ENCODE measurements at regions of chr10 and their contacts with region 1.

Region 1: GRCh38 chr10:102917962-102918816 is at the start of gene CNNM2:
- DNase-seq: peak; percentile 98 to 100 (median 100)
- ATAC-seq: peak; percentile 88
- H3K4me3 ChIP-seq: peak within 1 kb of the TSS; percentile 92
- H3K4me3 Mint-ChIP-seq: peak within 1 kb of the TSS; percentile 98
- H3K27ac ChIP-seq: peak within 1 kb of the TSS; percentile 91
- H3K27ac Mint-ChIP-seq: peak within 1 kb of the TSS; percentile 90
- H3K4me1 ChIP-seq: peaks cover 34% of the 10 kb centered on the region
- H3K4me1 Mint-ChIP-seq: peaks cover 59% of the 10 kb centered on the region
- H3K27me3 ChIP-seq: peaks cover 3 to 8% of the 10 kb centered on the region in 2 experiments
- H3K27me3 Mint-ChIP-seq: peaks cover 22% of the 10 kb centered on the region
- CTCF ChIP-seq: no peak
- total RNA-seq, gene CNNM2: 8.4 to 8.9 TPM

Region 2: GRCh38 chr10:102853944-102854694 is 64.1 kb before region 1 on chr10 and contains the start of gene BORCS7:
- CTCF ChIA-PET with region 1: no interaction called
- POLR2A ChIA-PET with region 1: interaction called, 8 read pairs
- intact Hi-C with region 1: loop called (anchors 1 to 2 kb)
- DNase-seq: peak; percentile 70 to 94 (median 78)
- ATAC-seq: peak; percentile 99
- H3K4me3 ChIP-seq: peak within 1 kb of the TSS; percentile 98
- H3K4me3 Mint-ChIP-seq: peak within 1 kb of the TSS; percentile 85
- H3K27ac ChIP-seq: peak within 1 kb of the TSS; percentile 87 to 97
- H3K27ac Mint-ChIP-seq: peak within 1 kb of the TSS; percentile 96
- H3K4me1 ChIP-seq: peaks cover 15% of the 10 kb centered on the region
- H3K4me1 Mint-ChIP-seq: peaks cover 16% of the 10 kb centered on the region
- H3K27me3 ChIP-seq: no peaks in the 10 kb centered on the region
- H3K27me3 Mint-ChIP-seq: no peaks in the 10 kb centered on the region
- CTCF ChIP-seq: no peak
- total RNA-seq, gene BORCS7: 10.6 to 11.6 TPM

Region 3: GRCh38 chr10:103069453-103070331 is 151.5 kb after region 1 on chr10:
- CTCF ChIA-PET with region 1: interaction called, 28 read pairs
- POLR2A ChIA-PET with region 1: interaction called, 17 read pairs
- intact Hi-C with region 1: loop called (anchors 1 kb)
- DNase-seq: peak; percentile 59 to 85 (median 68)
- ATAC-seq: peak; percentile 94
- H3K4me3 ChIP-seq: no peak overlapping the region
- H3K4me3 Mint-ChIP-seq: no peak overlapping the region
- H3K27ac ChIP-seq: no peak overlapping the region
- H3K27ac Mint-ChIP-seq: peak overlapping the region; percentile 61
- H3K4me1 ChIP-seq: peaks cover 19% of the 10 kb centered on the region
- H3K4me1 Mint-ChIP-seq: peaks cover 25% of the 10 kb centered on the region
- H3K27me3 ChIP-seq: no peaks in the 10 kb centered on the region
- H3K27me3 Mint-ChIP-seq: no peaks in the 10 kb centered on the region
- CTCF ChIP-seq: peak; percentile 65

Region 4: DNA sequence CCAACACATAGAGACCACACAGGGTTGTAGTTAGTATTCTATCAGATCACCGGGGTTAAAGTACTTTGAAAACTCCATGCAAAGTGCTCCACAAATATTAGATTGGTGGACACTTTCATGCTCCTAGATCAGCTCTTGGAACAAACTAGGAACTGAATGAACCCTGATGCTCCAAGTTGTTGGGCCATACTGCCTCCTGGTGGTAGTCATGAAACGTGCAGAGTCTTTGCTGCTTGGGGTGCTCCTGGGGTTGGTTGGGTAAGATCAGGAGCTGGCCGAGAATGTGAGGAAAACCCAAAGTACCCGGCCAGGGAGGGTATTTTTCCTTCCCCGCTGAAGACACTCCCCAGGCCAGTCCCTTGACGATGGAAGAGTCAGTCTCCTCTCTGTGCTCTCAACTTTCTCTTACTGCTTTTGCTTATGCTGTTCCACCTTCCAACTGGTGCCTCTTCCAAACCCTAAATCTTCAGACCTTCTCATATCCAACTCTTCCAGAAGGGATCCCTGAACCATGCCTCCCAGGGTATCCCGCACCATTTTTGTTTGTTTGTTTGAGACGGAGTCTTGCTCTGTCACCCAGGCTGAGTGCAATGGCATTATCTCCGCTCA is 326.6 kb after region 1 on chr10:
- CTCF ChIA-PET with region 1: interaction called, 3 read pairs
- POLR2A ChIA-PET with region 1: interaction called, 13 read pairs
- intact Hi-C with region 1: loop called (anchors 1 kb)
- DNase-seq: peak; percentile 41 to 82 (median 52)
- ATAC-seq: peak; percentile 60
- H3K4me3 ChIP-seq: no peak overlapping the region
- H3K4me3 Mint-ChIP-seq: no peak overlapping the region
- H3K27ac ChIP-seq: no peak overlapping the region
- H3K27ac Mint-ChIP-seq: no peak overlapping the region
- H3K4me1 ChIP-seq: peaks cover 7% of the 10 kb centered on the region
- H3K4me1 Mint-ChIP-seq: peaks cover 6% of the 10 kb centered on the region
- H3K27me3 ChIP-seq: peaks cover 0 to 2% of the 10 kb centered on the region in 2 experiments
- H3K27me3 Mint-ChIP-seq: no peaks in the 10 kb centered on the region
- CTCF ChIP-seq: peak; percentile 83

Region 5: GRCh38 chr10:103367782-103368518 is 449.8 kb after region 1 on chr10 and contains the start of gene TAF5:
- CTCF ChIA-PET with region 1: interaction called, 3 read pairs
- POLR2A ChIA-PET with region 1: interaction called, 6 read pairs
- intact Hi-C with region 1: loop called in 1 of 2 experiments (anchors 1 kb)
- DNase-seq: peak; percentile 78 to 96 (median 85)
- ATAC-seq: peak; percentile 61
- H3K4me3 ChIP-seq: peak within 1 kb of the TSS; percentile 60
- H3K4me3 Mint-ChIP-seq: peak within 1 kb of the TSS; percentile 100
- H3K27ac ChIP-seq: peak within 1 kb of the TSS; percentile 55 to 83
- H3K27ac Mint-ChIP-seq: peak within 1 kb of the TSS; percentile 80
- H3K4me1 ChIP-seq: peaks cover 22% of the 10 kb centered on the region
- H3K4me1 Mint-ChIP-seq: peaks cover 23% of the 10 kb centered on the region
- H3K27me3 ChIP-seq: no peaks in the 10 kb centered on the region
- H3K27me3 Mint-ChIP-seq: no peaks in the 10 kb centered on the region
- CTCF ChIP-seq: peak; percentile 22
- total RNA-seq, gene TAF5: 3.8 to 4.0 TPM

Measured in CD4-positive, alpha-beta T cell (primary cell).